ENCODE measurements at regions of chr14 and their contacts with region 1.

Region 1: DNA sequence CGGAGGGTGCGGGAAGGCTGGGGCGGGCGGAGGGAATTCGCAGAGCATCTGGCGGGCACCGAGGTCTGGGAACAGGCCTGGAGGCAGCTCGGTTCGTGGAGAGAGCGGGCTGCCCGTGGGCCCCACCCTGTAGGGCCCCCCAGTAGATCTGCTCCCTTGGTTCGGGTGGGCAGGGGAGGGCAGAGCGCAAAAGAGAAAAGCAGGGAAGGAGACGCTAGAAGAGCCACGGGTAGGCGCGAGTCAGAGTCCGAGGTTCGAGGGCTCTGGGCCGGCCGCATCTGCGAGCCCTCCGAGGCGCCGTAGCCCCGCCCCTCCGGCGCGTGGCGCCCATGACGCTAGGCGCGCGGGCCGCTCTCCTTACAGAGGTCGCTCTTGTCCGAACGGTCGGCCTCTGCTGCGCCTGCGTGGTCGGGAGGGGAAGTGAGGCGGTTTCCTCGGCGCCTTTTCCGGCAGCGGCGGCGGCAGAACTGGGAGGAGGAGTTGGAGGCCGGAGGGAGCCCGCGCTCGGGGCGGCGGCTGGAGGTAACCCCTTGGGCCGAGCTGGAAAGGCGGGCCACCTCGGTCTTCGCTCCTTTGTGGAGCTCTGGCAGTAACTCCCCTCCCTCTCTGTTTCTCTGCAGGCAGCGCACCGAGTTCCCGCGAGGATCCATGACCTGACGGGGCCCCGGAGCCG is at the start of gene ARF6:
- DNase-seq: peak; percentile 98
- H3K4me3 Mint-ChIP-seq: peak within 1 kb of the TSS; percentile 96
- H3K27ac Mint-ChIP-seq: peak within 1 kb of the TSS; percentile 100
- H3K4me1 Mint-ChIP-seq: peaks cover 20% of the 10 kb centered on the region
- H3K27me3 Mint-ChIP-seq: no peaks in the 10 kb centered on the region
- total RNA-seq, gene ARF6: 198 to 199 TPM

Region 2: DNA sequence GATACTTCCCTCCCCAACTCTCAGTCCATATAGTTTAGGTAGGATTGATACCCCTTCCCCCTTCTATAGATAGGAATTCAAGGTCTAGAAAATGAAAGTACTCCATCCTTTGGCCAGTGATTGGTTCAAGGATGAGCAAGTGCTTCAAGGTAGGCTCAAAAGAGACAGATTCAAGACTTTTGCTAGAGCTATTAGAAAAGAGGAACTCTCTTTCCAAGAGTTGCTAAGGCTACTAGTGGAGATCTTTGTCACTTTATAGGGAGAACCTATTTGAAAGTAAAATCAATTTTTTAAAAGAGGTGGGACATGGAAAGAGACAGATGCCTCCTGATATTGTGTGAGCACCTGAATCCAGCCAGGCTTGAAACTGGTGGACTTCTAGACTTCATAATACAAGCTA is 222.3 kb before region 1 on chr14:
- CTCF ChIA-PET with region 1: no interaction called
- POLR2A ChIA-PET with region 1: no interaction called
- DNase-seq: no peak
- H3K4me3 Mint-ChIP-seq: no peak overlapping the region
- H3K27ac Mint-ChIP-seq: no peak overlapping the region
- H3K4me1 Mint-ChIP-seq: peaks cover 2% of the 10 kb centered on the region
- H3K27me3 Mint-ChIP-seq: no peaks in the 10 kb centered on the region

Region 3: GRCh38 chr14:49828640-49829039 is 64.1 kb before region 1 on chr14:
- CTCF ChIA-PET with region 1: no interaction called
- POLR2A ChIA-PET with region 1: no interaction called
- DNase-seq: no peak
- H3K4me3 Mint-ChIP-seq: no peak overlapping the region
- H3K27ac Mint-ChIP-seq: no peak overlapping the region
- H3K4me1 Mint-ChIP-seq: peaks cover 5% of the 10 kb centered on the region
- H3K27me3 Mint-ChIP-seq: no peaks in the 10 kb centered on the region

Region 4: GRCh38 chr14:49867831-49868723 is 24.7 kb before region 1 on chr14:
- CTCF ChIA-PET with region 1: interaction called, 35 read pairs
- POLR2A ChIA-PET with region 1: interaction called, 162 read pairs
- DNase-seq: peak; percentile 99
- H3K4me3 Mint-ChIP-seq: peak overlapping the region; percentile 90
- H3K27ac Mint-ChIP-seq: peak overlapping the region; percentile 98
- H3K4me1 Mint-ChIP-seq: peaks cover 26% of the 10 kb centered on the region
- H3K27me3 Mint-ChIP-seq: no peaks in the 10 kb centered on the region

Region 5: DNA sequence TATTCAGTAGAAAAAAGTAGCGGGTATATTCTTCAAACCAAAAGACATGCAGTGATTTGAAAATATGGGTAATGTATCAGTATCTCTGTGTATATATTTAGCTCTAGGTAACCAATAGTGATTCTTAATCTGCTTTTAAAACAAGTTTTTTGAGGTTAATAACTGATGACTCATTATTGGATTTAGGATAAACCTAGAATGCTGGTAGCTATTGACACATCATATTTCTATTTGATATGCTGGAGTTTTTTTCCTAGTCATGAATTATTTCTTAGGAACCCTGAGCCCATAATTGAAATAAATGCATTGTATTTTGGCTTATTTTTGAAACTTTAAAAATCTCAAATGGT is 15.6 kb after region 1 on chr14:
- CTCF ChIA-PET with region 1: no interaction called
- POLR2A ChIA-PET with region 1: interaction called, 24 read pairs
- DNase-seq: no peak
- H3K4me3 Mint-ChIP-seq: peak overlapping the region; percentile 21
- H3K27ac Mint-ChIP-seq: peak overlapping the region; percentile 49
- H3K4me1 Mint-ChIP-seq: peaks cover 45% of the 10 kb centered on the region
- H3K27me3 Mint-ChIP-seq: no peaks in the 10 kb centered on the region

Region 6: GRCh38 chr14:49924852-49925251 is 32.1 kb after region 1 on chr14:
- CTCF ChIA-PET with region 1: no interaction called
- POLR2A ChIA-PET with region 1: no interaction called
- DNase-seq: no peak
- H3K4me3 Mint-ChIP-seq: no peak overlapping the region
- H3K27ac Mint-ChIP-seq: no peak overlapping the region
- H3K4me1 Mint-ChIP-seq: peaks cover 5% of the 10 kb centered on the region
- H3K27me3 Mint-ChIP-seq: no peaks in the 10 kb centered on the region

Region 7: GRCh38 chr14:49977126-49977841 is 84.5 kb after region 1 on chr14:
- CTCF ChIA-PET with region 1: interaction called, 5 read pairs
- POLR2A ChIA-PET with region 1: interaction called, 95 read pairs
- DNase-seq: no peak
- H3K4me3 Mint-ChIP-seq: peak overlapping the region; percentile 53
- H3K27ac Mint-ChIP-seq: peak overlapping the region; percentile 85
- H3K4me1 Mint-ChIP-seq: peaks cover 74% of the 10 kb centered on the region
- H3K27me3 Mint-ChIP-seq: no peaks in the 10 kb centered on the region

Region 8: GRCh38 chr14:50045039-50045711 is 152.4 kb after region 1 on chr14:
- CTCF ChIA-PET with region 1: interaction called, 5 read pairs
- POLR2A ChIA-PET with region 1: interaction called, 38 read pairs
- DNase-seq: peak; percentile 89
- H3K4me3 Mint-ChIP-seq: peak overlapping the region; percentile 6
- H3K27ac Mint-ChIP-seq: peak overlapping the region; percentile 92
- H3K4me1 Mint-ChIP-seq: peaks cover 70% of the 10 kb centered on the region
- H3K27me3 Mint-ChIP-seq: no peaks in the 10 kb centered on the region

Region 9: GRCh38 chr14:50116181-50116956 is 223.6 kb after region 1 on chr14 and contains the start of gene VCPKMT:
- CTCF ChIA-PET with region 1: no interaction called
- POLR2A ChIA-PET with region 1: interaction called, 10 read pairs
- DNase-seq: peak; percentile 97
- H3K4me3 Mint-ChIP-seq: peak within 1 kb of the TSS; percentile 99
- H3K27ac Mint-ChIP-seq: peak within 1 kb of the TSS; percentile 97
- H3K4me1 Mint-ChIP-seq: peaks cover 40% of the 10 kb centered on the region
- H3K27me3 Mint-ChIP-seq: no peaks in the 10 kb centered on the region
- total RNA-seq, gene VCPKMT: 7.5 to 9.5 TPM

Measured in activated CD4-positive, alpha-beta memory T cell treated with anti-CD3 and anti-CD28 coated beads, Interleukin-2, amount 10 ng/mL, durations not matched to agents 7 days and 5 days (primary cell).